ENCODE measurements at regions of chr3 and their contacts with region 1.

Region 1: GRCh38 chr3:132535575-132536441 is 61.3 kb upstream of the ACKR4 start:
- DNase-seq: peak; percentile 19 to 52 (median 30)
- H3K4me3 ChIP-seq: no peak overlapping the region
- H3K4me3 Mint-ChIP-seq: no peak overlapping the region
- H3K27ac ChIP-seq: no peak overlapping the region
- H3K27ac Mint-ChIP-seq: peak overlapping the region in 1 of 8 donors; percentile 29
- H3K4me1 ChIP-seq: no peaks in the 10 kb centered on the region
- H3K4me1 Mint-ChIP-seq: no peaks in the 10 kb centered on the region
- H3K27me3 ChIP-seq: no peaks in the 10 kb centered on the region
- H3K27me3 Mint-ChIP-seq: no peaks in the 10 kb centered on the region

Region 2: DNA sequence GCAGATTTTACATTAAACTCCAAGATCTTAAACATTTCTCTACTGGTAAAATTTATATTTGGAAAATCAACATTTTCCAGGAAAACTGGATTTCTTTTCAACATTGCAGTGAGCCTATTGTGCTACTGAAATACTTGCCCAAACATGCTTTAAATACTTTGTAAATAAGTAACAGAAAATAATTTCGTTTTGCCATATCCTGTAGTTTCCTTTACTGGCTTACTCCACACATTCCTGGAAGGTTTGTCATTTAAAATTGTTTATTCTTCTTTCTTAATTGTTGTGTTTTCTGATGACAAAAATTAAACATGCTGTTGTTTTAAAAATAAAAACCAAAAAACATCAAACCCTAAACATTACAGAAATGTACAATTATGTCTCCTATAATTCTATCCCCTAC is 101.8 kb after region 1 on chr3:
- CTCF ChIA-PET with region 1: interaction called, 13 read pairs
- POLR2A ChIA-PET with region 1: no interaction called
- DNase-seq: no peak
- H3K4me3 ChIP-seq: no peak overlapping the region
- H3K4me3 Mint-ChIP-seq: no peak overlapping the region
- H3K27ac ChIP-seq: no peak overlapping the region
- H3K27ac Mint-ChIP-seq: no peak overlapping the region
- H3K4me1 ChIP-seq: no peaks in the 10 kb centered on the region
- H3K4me1 Mint-ChIP-seq: no peaks in the 10 kb centered on the region
- H3K27me3 ChIP-seq: no peaks in the 10 kb centered on the region
- H3K27me3 Mint-ChIP-seq: no peaks in the 10 kb centered on the region